Ascending aorta (tissue), 2 donors: ENCODE measurements at regions of chr13 and their contacts with region 1.

Region 1: GRCh38 chr13:19863323-19864023 is at the start of gene ZMYM5:
- DNase-seq: peak; percentile 96 to 99
- H3K4me3 ChIP-seq: peak within 1 kb of the TSS; percentile 78 to 79
- H3K27ac ChIP-seq: peak within 1 kb of the TSS; percentile 97 to 99
- H3K4me1 ChIP-seq: peaks cover 4 to 26% of the 10 kb centered on the region in 2 donors
- H3K27me3 ChIP-seq: no peaks in the 10 kb centered on the region
- CTCF ChIP-seq: peak in 1 of 3 experiments; percentile 5
- total RNA-seq, gene ZMYM5: 14.2 TPM

Region 2: DNA sequence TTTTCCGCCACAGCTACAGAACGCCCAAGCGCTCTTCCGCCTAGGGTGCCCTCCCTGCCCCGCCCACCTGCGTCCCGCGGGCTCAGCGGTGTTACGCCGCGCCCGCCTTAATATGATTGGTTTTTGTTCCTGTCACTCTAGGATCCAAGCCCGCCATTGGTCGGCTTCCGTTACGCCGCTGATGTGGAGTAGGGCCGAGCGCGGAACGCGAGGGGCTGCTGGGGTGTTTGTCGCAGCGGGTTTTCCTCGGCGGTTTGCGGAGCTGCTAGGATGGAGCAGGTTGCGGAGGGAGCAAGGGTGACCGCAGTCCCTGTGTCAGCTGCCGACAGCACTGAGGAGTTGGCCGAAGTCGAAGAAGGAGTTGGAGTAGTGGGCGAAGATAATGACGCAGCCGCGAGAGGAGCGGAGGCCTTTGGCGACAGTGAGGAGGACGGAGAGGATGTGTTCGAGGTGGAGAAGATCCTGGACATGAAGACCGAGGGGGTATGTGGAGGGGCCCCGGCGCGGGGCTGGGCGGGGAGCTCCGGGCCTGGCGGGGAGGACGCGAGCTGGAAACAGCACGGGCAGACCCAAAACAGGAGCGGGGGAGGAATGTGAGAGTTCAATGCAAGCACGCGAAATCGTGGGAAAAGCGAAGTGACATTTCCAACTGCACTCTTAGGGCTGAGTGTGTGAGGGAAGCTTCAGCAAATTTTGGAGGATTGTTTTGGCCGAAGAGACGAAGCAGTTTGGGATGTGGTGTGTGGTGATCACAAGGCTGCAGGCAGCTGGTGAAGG is 229.8 kb before region 1 on chr13 and contains the start of gene MPHOSPH8:
- intact Hi-C with region 1: loop called (anchors 1 kb)
- DNase-seq: peak; percentile 80 to 97
- H3K4me3 ChIP-seq: peak within 1 kb of the TSS; percentile 71 to 93
- H3K27ac ChIP-seq: peak within 1 kb of the TSS; percentile 92 to 93
- H3K4me1 ChIP-seq: peaks cover 5 to 23% of the 10 kb centered on the region in 2 donors
- H3K27me3 ChIP-seq: no peaks in the 10 kb centered on the region
- CTCF ChIP-seq: no peak
- total RNA-seq, gene MPHOSPH8: 18.5 TPM

Region 3: GRCh38 chr13:19771030-19771615 is 92.3 kb before region 1 on chr13:
- intact Hi-C with region 1: no loop called
- DNase-seq: peak in 1 of 2 donors; percentile 57
- H3K4me3 ChIP-seq: peak overlapping the region in 1 of 2 donors; percentile 20
- H3K27ac ChIP-seq: peak overlapping the region in 1 of 2 donors; percentile 34
- H3K4me1 ChIP-seq: peaks cover 3 to 17% of the 10 kb centered on the region in 2 donors
- H3K27me3 ChIP-seq: no peaks in the 10 kb centered on the region
- CTCF ChIP-seq: no peak

Region 4: DNA sequence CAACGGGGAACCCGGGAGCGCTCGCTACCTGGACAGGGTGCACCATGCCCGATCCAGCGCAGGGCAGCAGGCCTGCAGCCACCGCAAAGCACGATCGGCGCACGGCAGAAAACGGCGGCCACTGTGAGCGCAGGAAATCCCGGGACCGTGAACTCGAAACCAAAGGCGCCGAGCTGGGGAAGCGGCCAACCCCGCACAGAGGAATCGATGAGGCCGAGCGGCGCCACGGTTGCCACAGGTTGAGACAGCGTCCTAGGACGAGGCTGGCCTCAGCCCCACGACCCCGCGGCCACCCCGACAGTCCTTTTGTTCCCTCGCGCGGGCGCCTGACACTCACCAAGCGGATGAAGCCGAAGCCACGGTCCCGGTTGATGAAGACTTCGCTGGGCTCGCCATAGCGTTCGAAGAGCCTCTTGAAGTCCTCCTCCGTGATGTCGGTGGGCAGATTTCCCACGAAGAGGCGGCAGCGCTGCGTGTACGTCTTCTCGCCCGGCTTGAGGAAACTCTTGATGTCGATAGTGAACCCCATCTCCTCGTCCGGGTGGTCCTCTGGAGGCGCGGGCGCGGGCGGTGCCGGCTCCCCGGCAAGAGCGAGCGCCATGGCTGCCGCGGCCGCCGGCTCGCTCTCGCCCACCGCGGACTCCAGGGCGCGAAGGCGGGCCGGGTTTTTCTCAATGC is 81.3 kb before region 1 on chr13:
- intact Hi-C with region 1: loop called (anchors 1 kb)
- DNase-seq: peak in 1 of 2 donors; percentile 70
- H3K4me3 ChIP-seq: peak overlapping the region; percentile 77 to 83
- H3K27ac ChIP-seq: peak overlapping the region; percentile 89 to 95
- H3K4me1 ChIP-seq: peaks cover 0 to 6% of the 10 kb centered on the region in 2 donors
- H3K27me3 ChIP-seq: no peaks in the 10 kb centered on the region
- CTCF ChIP-seq: no peak

Region 5: DNA sequence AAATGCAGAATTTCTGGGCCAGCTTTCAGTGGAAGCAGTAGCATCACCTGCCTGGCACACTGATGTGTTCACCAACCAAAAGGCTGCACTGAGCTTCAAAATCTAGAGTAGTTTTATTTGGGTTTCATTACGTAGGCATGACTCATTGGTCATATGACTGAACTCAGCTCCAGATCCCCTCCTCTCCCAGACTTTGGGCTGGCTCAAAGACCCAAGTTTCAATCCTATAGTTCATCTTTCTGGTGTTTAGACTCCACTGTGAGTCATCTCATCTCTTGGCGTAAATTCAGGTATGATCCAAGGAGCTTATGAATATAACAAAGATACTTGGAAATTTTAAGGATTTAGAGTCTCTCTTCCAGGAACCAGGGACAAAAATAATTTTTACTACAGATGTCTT is 17.7 kb before region 1 on chr13:
- intact Hi-C with region 1: loop called (anchors 1 kb)
- DNase-seq: peak in 1 of 2 donors; percentile 73
- H3K4me3 ChIP-seq: no peak overlapping the region
- H3K27ac ChIP-seq: peak overlapping the region; percentile 38 to 47
- H3K4me1 ChIP-seq: peaks cover 0 to 26% of the 10 kb centered on the region in 2 donors
- H3K27me3 ChIP-seq: no peaks in the 10 kb centered on the region
- CTCF ChIP-seq: no peak

Region 6: DNA sequence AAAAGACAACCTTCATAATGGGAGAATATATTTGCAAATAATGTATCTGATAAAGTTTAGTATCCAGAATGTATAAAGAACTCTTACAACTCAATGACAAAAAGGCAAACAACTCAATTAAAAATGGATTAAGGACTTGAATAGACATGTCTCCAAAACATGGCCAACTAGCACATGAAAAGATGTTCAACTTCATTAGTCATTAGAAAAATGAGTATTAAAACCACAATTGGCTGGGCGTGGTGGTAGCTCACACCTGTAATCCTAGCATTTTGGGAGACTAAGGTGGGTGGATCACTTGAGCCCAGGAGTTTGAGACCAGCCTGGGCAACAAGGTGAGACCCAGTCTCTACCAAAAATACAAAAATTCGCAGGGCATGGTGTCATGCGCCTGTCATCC is 18.8 kb after region 1 on chr13:
- intact Hi-C with region 1: no loop called
- DNase-seq: no peak
- H3K4me3 ChIP-seq: no peak overlapping the region
- H3K27ac ChIP-seq: no peak overlapping the region
- H3K4me1 ChIP-seq: no peaks in the 10 kb centered on the region
- H3K27me3 ChIP-seq: no peaks in the 10 kb centered on the region
- CTCF ChIP-seq: no peak

Region 7: DNA sequence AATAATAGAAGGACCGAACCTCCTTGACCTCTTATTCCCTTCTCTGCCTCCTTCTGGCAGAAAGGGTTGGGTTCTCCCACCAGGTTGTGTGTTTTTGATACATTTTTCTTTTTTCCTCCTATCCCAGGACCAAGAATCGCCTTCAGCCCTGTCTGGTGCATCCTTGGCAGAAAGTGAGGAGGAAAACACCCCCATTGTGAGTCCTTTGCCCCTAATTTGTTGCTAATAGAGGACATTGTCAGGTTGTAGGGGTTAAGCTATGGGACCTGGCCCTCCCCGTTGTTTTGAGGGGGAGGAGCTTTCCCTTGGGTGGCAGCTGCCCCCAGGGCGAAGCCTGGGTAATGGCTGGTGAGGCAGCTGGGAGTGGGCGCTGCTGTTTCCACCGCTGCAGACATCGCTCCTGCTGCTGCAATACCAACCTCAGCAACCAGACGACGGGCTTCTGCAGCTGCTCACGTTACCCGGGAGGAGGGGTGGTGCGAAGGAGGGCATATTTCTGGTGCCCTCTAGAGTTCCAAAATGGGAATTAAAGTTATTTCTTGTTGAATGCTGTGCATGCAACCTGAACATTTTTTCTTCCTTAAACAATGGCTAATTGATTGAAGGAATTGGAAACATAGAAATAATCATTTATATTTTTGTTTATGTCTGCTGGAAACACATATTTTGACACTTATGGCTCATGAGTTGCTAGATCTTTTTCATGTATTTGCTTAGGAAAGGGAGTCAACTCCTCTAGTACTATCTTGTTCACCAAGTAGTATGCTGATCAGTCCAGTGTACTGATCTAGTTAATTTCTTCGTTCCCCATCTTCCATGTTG is 96.6 kb after region 1 on chr13:
- intact Hi-C with region 1: loop called (anchors 1 kb)
- DNase-seq: peak; percentile 65 to 92
- H3K4me3 ChIP-seq: peak overlapping the region; percentile 75 to 88
- H3K27ac ChIP-seq: peak overlapping the region; percentile 98 to 99
- H3K4me1 ChIP-seq: peaks cover 0 to 31% of the 10 kb centered on the region in 2 donors
- H3K27me3 ChIP-seq: no peaks in the 10 kb centered on the region
- CTCF ChIP-seq: peak; percentile 85 to 92 (median 92)

Region 8: GRCh38 chr13:20118268-20119140 is 255.0 kb after region 1 on chr13:
- intact Hi-C with region 1: loop called (anchors 5 kb)
- DNase-seq: peak in 1 of 2 donors; percentile 74
- H3K4me3 ChIP-seq: peak overlapping the region; percentile 77 to 82
- H3K27ac ChIP-seq: peak overlapping the region; percentile 79 to 82
- H3K4me1 ChIP-seq: no peaks in the 10 kb centered on the region
- H3K27me3 ChIP-seq: no peaks in the 10 kb centered on the region
- CTCF ChIP-seq: no peak

Region 9: DNA sequence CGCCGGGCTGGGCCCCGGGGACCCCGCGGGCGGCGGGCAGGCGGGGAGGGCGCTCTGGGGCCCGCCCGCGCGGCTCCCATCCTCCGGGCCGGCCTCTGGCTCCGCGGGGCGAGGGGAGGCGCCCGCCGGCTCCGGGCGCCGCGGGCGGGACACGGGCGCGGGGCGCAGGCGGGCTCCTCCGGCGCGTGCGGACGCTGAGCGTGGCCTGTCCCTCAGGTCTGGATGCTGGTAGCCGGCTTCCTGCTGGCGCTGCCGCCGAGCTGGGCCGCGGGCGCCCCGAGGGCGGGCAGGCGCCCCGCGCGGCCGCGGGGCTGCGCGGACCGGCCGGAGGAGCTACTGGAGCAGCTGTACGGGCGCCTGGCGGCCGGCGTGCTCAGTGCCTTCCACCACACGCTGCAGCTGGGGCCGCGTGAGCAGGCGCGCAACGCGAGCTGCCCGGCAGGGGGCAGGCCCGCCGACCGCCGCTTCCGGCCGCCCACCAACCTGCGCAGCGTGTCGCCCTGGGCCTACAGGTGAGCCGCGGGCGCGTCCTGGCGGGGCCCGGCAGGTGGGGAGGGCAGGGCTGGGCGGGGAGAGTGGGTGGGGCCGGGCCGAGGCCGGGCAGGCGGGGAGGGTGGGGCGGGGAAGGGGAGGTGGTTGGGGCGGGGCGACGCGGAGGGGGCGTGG is 840.4 kb after region 1 on chr13:
- intact Hi-C with region 1: loop called (anchors 10 kb)
- DNase-seq: peak in 1 of 2 donors; percentile 84
- H3K4me3 ChIP-seq: peak overlapping the region; percentile 70 to 95
- H3K27ac ChIP-seq: peak overlapping the region in 1 of 2 donors; percentile 38
- H3K4me1 ChIP-seq: peaks cover 3% of the 10 kb centered on the region in 2 donors
- H3K27me3 ChIP-seq: no peaks in the 10 kb centered on the region
- CTCF ChIP-seq: peak; percentile 16 to 81 (median 42)